Ovary (tissue), 10 donors: ENCODE measurements at regions of chr5 and their contacts with region 1.

Region 1: DNA sequence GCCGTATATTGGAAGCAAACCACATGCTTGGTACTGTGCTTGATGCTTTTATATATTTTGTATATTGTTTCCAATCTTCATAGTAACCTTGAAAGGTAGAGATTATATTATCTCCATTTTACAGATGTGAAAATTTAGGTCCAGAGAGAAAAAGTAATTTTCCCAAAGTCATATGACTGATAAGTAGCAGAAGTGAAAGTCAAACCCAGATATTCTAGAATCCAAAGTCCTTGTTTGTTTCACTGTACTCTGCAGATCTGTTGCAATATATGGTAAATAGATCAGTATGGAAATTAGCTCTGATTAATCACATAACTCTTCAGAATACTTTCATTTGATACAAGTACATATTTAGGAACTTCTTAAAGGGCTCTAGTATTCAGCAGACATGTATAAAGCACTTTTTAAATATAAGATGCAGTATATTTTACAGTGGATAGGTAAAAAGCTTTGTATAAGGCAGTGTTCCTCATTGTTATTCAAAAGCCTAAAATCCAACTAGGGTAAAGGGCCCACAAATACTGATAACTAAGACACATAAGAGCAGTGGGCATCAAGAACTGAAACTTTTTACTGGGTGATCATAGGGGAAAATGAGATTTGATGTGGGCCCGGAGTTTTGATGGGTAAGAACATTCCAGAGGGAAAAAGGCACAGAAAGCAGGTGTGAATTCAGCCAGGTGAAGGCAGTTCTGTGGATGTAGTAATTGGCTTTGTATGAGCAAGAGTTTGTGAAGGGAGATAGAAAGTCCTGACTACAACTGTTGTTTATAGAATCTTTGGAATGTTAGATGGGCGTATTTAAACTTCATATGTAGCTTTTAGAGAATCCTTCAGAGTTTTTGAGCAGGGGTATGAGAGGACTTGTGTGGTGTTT is 25.0 kb downstream of the NDFIP1 start:
- DNase-seq: no peak
- H3K4me3 ChIP-seq: no peak overlapping the region
- H3K27ac ChIP-seq: no peak overlapping the region
- H3K4me1 ChIP-seq: no peaks in the 10 kb centered on the region
- H3K27me3 ChIP-seq: no peaks in the 10 kb centered on the region
- CTCF ChIP-seq: no peak
- EP300 ChIP-seq: no peak
- POLR2A ChIP-seq: no peak

Region 2: GRCh38 chr5:141757402-141757801 is 376.2 kb before region 1 on chr5:
- intact Hi-C with region 1: no loop called
- DNase-seq: no peak
- H3K4me3 ChIP-seq: no peak overlapping the region
- H3K27ac ChIP-seq: no peak overlapping the region
- H3K4me1 ChIP-seq: no peaks in the 10 kb centered on the region
- H3K27me3 ChIP-seq: no peaks in the 10 kb centered on the region
- CTCF ChIP-seq: no peak
- EP300 ChIP-seq: no peak
- POLR2A ChIP-seq: no peak

Region 3: GRCh38 chr5:142000703-142001484 is 132.7 kb before region 1 on chr5:
- intact Hi-C with region 1: loop called in 1 of 4 experiments (anchors 10 kb)
- DNase-seq: no peak
- H3K4me3 ChIP-seq: no peak overlapping the region
- H3K27ac ChIP-seq: no peak overlapping the region
- H3K4me1 ChIP-seq: no peaks in the 10 kb centered on the region
- H3K27me3 ChIP-seq: no peaks in the 10 kb centered on the region
- CTCF ChIP-seq: no peak
- EP300 ChIP-seq: no peak
- POLR2A ChIP-seq: no peak

Region 4: DNA sequence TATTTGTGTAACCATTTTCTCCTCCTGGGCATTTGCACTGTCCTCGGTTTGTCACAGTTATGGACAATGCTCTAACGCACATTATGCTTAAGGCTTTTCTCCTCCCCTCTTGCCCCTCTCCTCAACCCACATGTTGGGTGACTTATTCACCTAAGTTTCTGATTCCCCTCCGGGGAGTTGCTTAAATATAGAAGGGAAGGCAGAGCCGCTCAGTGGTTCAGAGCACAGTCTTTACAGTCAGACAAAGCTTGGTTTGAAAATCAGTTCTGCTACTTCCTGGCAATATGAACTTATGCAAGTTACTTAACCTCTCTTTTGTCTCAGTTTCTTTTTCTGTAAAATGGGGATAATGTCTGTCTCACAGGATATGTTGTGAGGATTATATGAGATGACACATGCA is 232.4 kb after region 1 on chr5:
- intact Hi-C with region 1: no loop called
- DNase-seq: no peak
- H3K4me3 ChIP-seq: no peak overlapping the region
- H3K27ac ChIP-seq: no peak overlapping the region
- H3K4me1 ChIP-seq: peaks cover 1% of the 10 kb centered on the region
- H3K27me3 ChIP-seq: no peaks in the 10 kb centered on the region
- CTCF ChIP-seq: no peak
- EP300 ChIP-seq: no peak
- POLR2A ChIP-seq: no peak